Left ventricle myocardium inferior (tissue), 1 donor: ENCODE measurements at regions of chr10 and their contacts with region 1.

Region 1: GRCh38 chr10:24360282-24361127 is 151.6 kb downstream of the KIAA1217 start:
- DNase-seq: peak; percentile 72
- H3K4me3 ChIP-seq: no peak overlapping the region
- H3K27ac ChIP-seq: no peak overlapping the region
- H3K4me1 ChIP-seq: peaks cover 26% of the 10 kb centered on the region
- H3K27me3 ChIP-seq: no peaks in the 10 kb centered on the region
- CTCF ChIP-seq: peak; percentile 83

Region 2: DNA sequence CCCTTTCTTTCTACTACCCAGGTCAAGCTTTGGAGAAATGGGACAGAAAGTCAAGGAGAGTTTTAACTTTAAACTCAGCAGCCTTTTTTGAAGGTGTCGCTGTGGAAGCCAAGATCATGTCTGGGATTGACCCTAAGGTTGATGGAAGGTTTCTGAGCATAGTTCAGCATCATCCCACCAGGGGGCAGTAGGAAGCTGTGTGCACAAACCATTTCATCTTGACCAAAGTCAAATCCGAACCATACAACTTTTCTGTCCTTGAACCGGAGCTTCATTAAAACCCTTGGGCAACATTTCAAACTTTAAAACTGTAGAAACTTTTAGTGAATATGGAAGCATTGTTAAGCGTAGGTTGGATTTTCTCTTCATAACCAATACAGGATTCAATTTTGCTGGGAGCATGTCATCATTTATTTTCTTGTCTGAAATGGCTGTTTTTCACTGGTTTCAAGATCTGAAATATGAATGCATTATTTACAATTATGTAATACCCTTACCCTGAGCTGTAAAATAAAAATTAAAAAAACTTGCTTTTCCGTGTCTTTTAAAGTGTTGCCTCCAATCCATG is 365.9 kb before region 1 on chr10:
- intact Hi-C with region 1: loop called (anchors 10 kb)
- DNase-seq: peak; percentile 36
- H3K4me3 ChIP-seq: peak overlapping the region; percentile 17
- H3K27ac ChIP-seq: no peak overlapping the region
- H3K4me1 ChIP-seq: peaks cover 6% of the 10 kb centered on the region
- H3K27me3 ChIP-seq: no peaks in the 10 kb centered on the region
- CTCF ChIP-seq: peak; percentile 95